ENCODE measurements at regions of chr15 and their contacts with region 1.

Region 1: DNA sequence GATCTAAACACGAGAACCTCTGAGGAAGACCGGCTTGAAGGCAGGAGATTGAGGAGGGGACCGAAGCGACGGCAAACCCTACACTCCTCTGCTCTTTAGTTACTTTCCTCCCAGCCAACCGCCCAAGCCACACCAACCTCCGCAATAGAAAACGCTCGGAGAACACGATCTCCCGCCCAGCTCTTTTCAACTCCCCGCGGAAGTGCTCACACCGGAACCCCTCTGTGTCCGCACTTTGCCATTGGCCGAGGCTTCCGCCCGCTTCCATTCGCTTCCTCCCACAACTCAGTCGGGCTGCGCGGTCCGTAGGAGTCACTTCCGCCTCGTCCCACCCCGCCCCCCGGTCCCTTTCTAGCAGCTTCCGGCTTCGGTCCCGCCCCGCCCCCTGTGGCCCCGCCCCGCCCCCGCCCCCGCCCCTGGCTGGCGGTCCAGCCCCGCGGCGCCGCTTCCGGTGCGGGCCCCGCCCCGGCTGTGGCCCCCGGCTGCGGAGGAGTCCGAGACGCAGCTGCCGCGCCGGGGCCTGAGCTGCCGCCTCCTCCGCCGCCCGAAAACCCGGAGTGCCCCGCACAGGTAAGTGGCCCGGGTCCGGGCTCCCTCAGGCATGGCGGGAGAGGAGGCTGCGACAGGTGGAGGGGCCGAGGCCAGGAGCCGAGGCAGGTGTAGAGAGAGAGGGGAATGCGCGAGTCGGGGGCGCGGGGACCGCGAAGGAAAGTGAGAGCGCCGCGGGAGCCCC is at the start of gene ARID3B:
- DNase-seq: peak; percentile 99
- ATAC-seq: peak; percentile 89
- H3K4me3 Mint-ChIP-seq: peak within 1 kb of the TSS; percentile 94
- H3K27ac Mint-ChIP-seq: peak within 1 kb of the TSS; percentile 99
- H3K4me1 Mint-ChIP-seq: peaks cover 53% of the 10 kb centered on the region
- H3K27me3 Mint-ChIP-seq: no peaks in the 10 kb centered on the region
- total RNA-seq, gene ARID3B: 56.0 to 63.6 TPM

Region 2: DNA sequence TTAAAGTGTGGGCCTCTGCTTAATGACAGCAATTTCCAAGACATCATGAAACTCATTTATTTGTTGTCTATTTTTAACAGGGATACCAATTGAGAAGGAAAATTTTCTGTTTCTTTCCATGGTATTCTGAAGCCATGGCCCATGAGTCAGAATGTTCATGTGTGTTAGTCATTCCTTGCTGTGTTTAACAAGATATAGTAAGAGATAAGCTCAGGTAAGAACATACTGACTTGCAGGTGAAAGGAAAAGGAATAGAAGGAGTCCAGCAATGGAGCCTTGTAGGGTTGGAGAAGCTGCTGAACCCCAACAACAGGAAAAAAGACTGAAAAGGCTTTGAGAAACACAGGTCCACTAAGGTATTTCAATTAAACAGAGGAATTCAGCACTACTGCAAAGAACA is 16.9 kb before region 1 on chr15:
- CTCF ChIA-PET with region 1: no interaction called
- DNase-seq: no peak
- ATAC-seq: no peak
- H3K4me3 Mint-ChIP-seq: no peak overlapping the region
- H3K27ac Mint-ChIP-seq: no peak overlapping the region
- H3K4me1 Mint-ChIP-seq: peaks cover 3% of the 10 kb centered on the region
- H3K27me3 Mint-ChIP-seq: no peaks in the 10 kb centered on the region

Region 3: GRCh38 chr15:74552773-74553441 is 12.0 kb after region 1 on chr15:
- CTCF ChIA-PET with region 1: interaction called, 15 read pairs
- DNase-seq: peak; percentile 66
- ATAC-seq: peak; percentile 92
- H3K4me3 Mint-ChIP-seq: peak overlapping the region; percentile 59
- H3K27ac Mint-ChIP-seq: peak overlapping the region; percentile 92
- H3K4me1 Mint-ChIP-seq: peaks cover 67% of the 10 kb centered on the region
- H3K27me3 Mint-ChIP-seq: no peaks in the 10 kb centered on the region

Region 4: DNA sequence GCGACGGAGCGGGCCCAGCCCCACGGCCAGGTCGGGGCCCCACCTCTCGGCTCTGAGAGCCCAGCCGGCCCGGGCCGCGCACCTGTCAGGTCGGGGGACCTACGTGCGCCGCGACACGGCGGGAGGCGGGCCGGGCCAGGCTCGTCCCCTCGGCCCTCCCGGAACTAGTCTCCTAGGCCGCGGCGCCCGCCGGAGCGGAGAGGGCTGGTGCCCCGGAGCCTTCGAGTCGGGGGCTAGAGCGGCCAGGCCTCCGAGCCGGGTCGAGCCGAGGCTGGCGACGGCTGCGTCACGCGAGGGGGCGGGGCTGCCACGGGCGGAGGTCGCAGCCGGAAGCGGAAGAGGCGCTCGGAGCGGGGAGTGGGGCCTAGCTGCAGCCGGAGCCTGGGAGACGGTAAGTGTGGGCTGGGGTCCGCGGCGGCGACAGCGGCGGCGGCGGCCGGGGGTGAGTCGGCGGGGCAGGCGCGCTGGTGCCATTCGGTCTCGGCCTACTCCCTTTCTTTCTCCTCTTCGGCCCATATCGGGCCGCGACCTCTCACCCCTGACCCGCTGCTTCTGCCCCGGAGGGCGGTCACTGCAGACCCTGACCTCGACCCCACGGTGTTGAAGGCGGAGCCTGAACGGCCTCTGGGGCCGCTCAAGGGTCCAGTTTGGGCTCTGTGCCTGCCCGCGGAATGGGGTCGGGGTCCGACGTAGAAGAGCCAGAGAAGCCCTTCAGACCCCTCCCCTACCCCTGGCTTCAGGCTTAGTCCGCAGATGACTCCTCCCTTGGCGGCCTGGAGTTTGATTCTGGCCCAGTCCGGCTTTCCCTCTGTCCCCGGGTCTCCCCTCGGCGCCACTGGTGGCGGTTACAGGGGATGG is 74.8 kb after region 1 on chr15 and contains the start of gene CLK3:
- CTCF ChIA-PET with region 1: interaction called, 12 read pairs
- DNase-seq: peak; percentile 97
- ATAC-seq: peak; percentile 85
- H3K4me3 Mint-ChIP-seq: peak within 1 kb of the TSS; percentile 92
- H3K27ac Mint-ChIP-seq: peak within 1 kb of the TSS; percentile 97
- H3K4me1 Mint-ChIP-seq: peaks cover 38% of the 10 kb centered on the region
- H3K27me3 Mint-ChIP-seq: no peaks in the 10 kb centered on the region
- total RNA-seq, gene CLK3: 120 to 140 TPM

Region 5: GRCh38 chr15:74653426-74654123 is 112.6 kb after region 1 on chr15:
- CTCF ChIA-PET with region 1: no interaction called
- DNase-seq: no peak
- ATAC-seq: no peak
- H3K4me3 Mint-ChIP-seq: no peak overlapping the region
- H3K27ac Mint-ChIP-seq: peak overlapping the region; percentile 52
- H3K4me1 Mint-ChIP-seq: peaks cover 42% of the 10 kb centered on the region
- H3K27me3 Mint-ChIP-seq: no peaks in the 10 kb centered on the region